Posterior vena cava (tissue), 2 donors: ENCODE measurements at regions of chr13 and their contacts with region 1.

Region 1: GRCh38 chr13:79295906-79296706 is 109.9 kb downstream of the RBM26 start:
- DNase-seq: no peak

Region 2: DNA sequence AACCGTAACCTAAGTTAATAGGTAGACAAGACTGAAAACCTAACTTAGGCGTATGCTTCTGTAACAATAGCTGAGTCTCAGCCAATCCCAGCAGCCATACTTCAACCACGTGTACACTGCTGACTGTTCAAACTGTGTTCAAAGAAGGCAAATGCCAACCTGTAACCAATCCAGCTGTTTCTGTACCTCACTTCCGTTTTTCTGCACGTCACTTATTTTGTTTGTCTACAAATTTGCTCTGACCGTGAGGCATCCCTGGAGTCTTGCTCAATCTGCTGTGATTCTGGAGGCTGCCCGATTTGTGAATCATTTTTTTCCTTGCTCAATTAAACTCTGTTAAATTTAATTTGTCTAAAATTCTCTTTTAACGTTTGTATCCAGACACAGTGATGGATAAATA is 1436.7 kb before region 1 on chr13:
- intact Hi-C with region 1: loop called in 1 of 2 experiments (anchors 5 kb)
- DNase-seq: no peak

Region 3: GRCh38 chr13:79604752-79605151 is 308.6 kb after region 1 on chr13:
- intact Hi-C with region 1: loop called in 1 of 2 experiments (anchors 10 kb)
- DNase-seq: no peak